Heart left ventricle (tissue), 16 donors: ENCODE measurements at regions of chr20 and their contacts with region 1.

Region 1: GRCh38 chr20:23995905-23996666 is 7.5 kb upstream of the GGTLC1 start:
- DNase-seq: peak in 4 of 5 donors; percentile 25 to 52 (median 42)
- ATAC-seq: no peak
- H3K4me3 ChIP-seq: no peak overlapping the region
- H3K27ac ChIP-seq: no peak overlapping the region
- H3K4me1 ChIP-seq: no peaks in the 10 kb centered on the region
- H3K27me3 ChIP-seq: peaks cover 0 to 26% (median 0%) of the 10 kb centered on the region in 9 donors
- CTCF ChIP-seq: peak; percentile 70 to 89 (median 81)
- POLR2A ChIP-seq: no peak

Region 2: DNA sequence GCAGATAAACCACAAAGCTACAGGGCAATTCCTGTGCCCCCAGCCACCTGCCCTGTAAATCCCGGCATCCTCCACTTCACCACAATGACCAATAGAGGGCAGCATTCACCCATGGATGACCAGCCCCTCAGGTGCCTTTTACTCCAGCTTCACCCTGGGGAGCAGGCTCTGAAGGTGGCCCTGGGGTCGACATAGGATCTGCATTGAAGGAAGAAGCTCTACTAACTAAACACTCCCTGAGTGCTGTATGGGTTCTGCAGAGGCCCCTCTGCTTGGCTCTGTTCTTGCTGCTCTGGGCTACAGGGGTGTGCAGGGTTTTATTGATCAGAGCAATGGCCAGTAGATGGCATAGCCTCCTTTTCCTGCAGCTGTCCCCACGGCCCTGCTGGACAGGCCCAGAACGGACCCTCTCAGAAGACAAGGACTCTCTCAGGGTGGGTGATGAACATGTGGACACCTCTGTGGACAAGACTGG is 327.6 kb before region 1 on chr20:
- intact Hi-C with region 1: loop called in 8 of 10 experiments (anchors 5 to 10 kb)
- DNase-seq: peak in 4 of 5 donors; percentile 40 to 54 (median 48)
- ATAC-seq: peak; percentile 47 to 76 (median 73)
- H3K4me3 ChIP-seq: no peak overlapping the region
- H3K27ac ChIP-seq: no peak overlapping the region
- H3K4me1 ChIP-seq: peaks cover 0 to 12% (median 1%) of the 10 kb centered on the region in 12 donors
- H3K27me3 ChIP-seq: no peaks in the 10 kb centered on the region
- CTCF ChIP-seq: peak; percentile 78 to 94 (median 84)
- POLR2A ChIP-seq: no peak

Region 3: GRCh38 chr20:23679133-23680092 is 316.7 kb before region 1 on chr20:
- intact Hi-C with region 1: loop called in 1 of 10 experiments (anchors 10 kb)
- DNase-seq: no peak
- ATAC-seq: peak in 1 of 4 donors; percentile 13
- H3K4me3 ChIP-seq: no peak overlapping the region
- H3K27ac ChIP-seq: no peak overlapping the region
- H3K4me1 ChIP-seq: peaks cover 0 to 12% (median 0%) of the 10 kb centered on the region in 12 donors
- H3K27me3 ChIP-seq: no peaks in the 10 kb centered on the region
- CTCF ChIP-seq: no peak
- POLR2A ChIP-seq: no peak

Region 4: GRCh38 chr20:23889775-23890211 is 106.3 kb before region 1 on chr20:
- intact Hi-C with region 1: loop called in 2 of 10 experiments (anchors 5 kb)
- DNase-seq: peak in 1 of 5 donors; percentile 39
- ATAC-seq: peak; percentile 80 to 90 (median 90)
- H3K4me3 ChIP-seq: no peak overlapping the region
- H3K27ac ChIP-seq: no peak overlapping the region
- H3K4me1 ChIP-seq: no peaks in the 10 kb centered on the region
- H3K27me3 ChIP-seq: peaks cover 0 to 14% (median 0%) of the 10 kb centered on the region in 9 donors
- CTCF ChIP-seq: peak; percentile 49 to 77 (median 68)
- POLR2A ChIP-seq: no peak

Region 5: GRCh38 chr20:23937303-23938117 is 58.6 kb before region 1 on chr20:
- intact Hi-C with region 1: loop called in 9 of 10 experiments (anchors 2 to 5 kb)
- DNase-seq: peak in 4 of 5 donors; percentile 30 to 52 (median 41)
- ATAC-seq: peak; percentile 81 to 94 (median 92)
- H3K4me3 ChIP-seq: no peak overlapping the region
- H3K27ac ChIP-seq: no peak overlapping the region
- H3K4me1 ChIP-seq: peaks cover 0 to 6% (median 0%) of the 10 kb centered on the region in 12 donors
- H3K27me3 ChIP-seq: peaks cover 0 to 7% (median 0%) of the 10 kb centered on the region in 9 donors
- CTCF ChIP-seq: peak; percentile 60 to 83 (median 77)
- POLR2A ChIP-seq: no peak

Region 6: DNA sequence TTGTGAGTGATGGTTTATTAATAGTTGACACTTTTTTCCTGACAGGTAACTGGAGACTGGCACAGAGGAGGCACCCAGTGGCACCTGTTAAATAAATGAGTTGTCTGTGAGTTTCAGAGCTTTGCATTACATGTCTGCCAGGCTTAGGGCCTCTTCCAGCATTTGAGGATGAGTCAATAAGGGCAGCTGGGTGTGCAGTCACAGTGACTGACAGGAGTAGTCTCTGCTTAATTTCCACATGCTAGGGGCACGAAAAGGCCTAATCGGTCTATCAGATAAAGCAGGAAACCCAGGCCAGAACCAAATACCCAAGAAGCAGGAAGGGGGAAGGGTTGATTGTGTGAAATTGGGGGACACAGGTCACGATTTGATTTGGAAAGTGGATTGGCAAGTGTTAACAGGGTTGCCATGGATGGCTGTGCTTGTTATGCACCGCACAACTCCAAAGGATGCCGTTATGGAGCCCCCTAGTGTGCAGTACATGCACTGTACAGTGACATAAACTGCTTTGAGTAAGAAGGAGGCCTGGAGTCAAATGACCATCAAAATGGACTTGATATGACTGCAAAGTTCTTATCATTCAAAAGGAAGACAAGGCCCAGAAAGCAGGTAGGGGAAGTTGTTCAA is 104.4 kb after region 1 on chr20:
- intact Hi-C with region 1: loop called in 1 of 10 experiments (anchors 5 kb)
- DNase-seq: peak in 4 of 5 donors; percentile 30 to 54 (median 38)
- ATAC-seq: peak; percentile 74 to 92 (median 90)
- H3K4me3 ChIP-seq: no peak overlapping the region
- H3K27ac ChIP-seq: no peak overlapping the region
- H3K4me1 ChIP-seq: no peaks in the 10 kb centered on the region
- H3K27me3 ChIP-seq: peaks cover 0 to 47% (median 3%) of the 10 kb centered on the region in 9 donors
- CTCF ChIP-seq: peak; percentile 61 to 80 (median 72)
- POLR2A ChIP-seq: no peak

Region 7: GRCh38 chr20:24194137-24194536 is 198.1 kb after region 1 on chr20:
- intact Hi-C with region 1: no loop called
- DNase-seq: no peak
- ATAC-seq: no peak
- H3K4me3 ChIP-seq: no peak overlapping the region
- H3K27ac ChIP-seq: no peak overlapping the region
- H3K4me1 ChIP-seq: no peaks in the 10 kb centered on the region
- H3K27me3 ChIP-seq: no peaks in the 10 kb centered on the region
- CTCF ChIP-seq: no peak
- POLR2A ChIP-seq: no peak